ENCODE measurements at regions of chr21 and their contacts with region 1.

Region 1: DNA sequence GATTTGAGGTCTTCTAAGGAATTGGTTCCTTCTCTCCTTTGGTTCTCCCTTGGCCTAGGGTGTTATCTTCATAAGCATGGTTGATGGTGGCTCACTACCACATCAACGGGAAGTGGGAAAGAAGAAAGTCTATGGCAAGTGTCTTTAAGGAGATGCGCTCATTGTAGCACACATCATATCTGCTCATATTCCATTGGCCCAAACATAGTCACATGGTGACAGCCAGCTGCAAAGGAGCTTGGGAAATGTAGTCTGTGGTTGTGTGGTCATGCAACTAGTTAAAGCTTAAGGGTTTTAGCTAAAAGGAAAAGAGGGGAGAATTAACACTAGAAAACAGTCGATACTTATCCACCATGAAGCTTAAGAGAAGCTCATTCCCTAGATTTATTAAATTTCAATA is 11.4 kb upstream of the MRPS6 start:
- DNase-seq: no peak

Region 2: GRCh38 chr21:34187935-34188334 is 126.0 kb after region 1 on chr21:
- intact Hi-C with region 1: loop called in 1 of 2 experiments (anchors 1 kb)
- DNase-seq: peak; percentile 92

Region 3: DNA sequence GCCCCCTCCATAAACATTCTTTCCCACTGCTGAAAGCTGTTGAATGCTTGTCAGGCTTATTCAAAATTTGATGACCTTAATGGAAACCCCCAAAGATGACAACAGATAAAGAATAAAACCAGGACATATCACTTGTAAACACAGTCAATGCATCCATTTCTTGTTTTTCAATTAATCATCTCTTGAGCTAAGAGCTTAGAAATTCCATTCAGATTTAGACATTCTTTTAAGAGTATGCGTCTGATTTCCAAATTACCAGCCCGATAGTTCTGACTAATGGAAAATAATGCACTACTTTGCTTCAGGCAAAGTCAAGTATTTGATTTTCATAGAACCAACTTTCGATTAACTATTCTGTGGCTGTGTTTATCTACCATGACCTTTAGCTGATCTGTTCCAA is 1087.7 kb after region 1 on chr21:
- intact Hi-C with region 1: no loop called
- DNase-seq: no peak